Calu3 (cell line): ENCODE measurements at regions of chr17 and their contacts with region 1.

Region 1: DNA sequence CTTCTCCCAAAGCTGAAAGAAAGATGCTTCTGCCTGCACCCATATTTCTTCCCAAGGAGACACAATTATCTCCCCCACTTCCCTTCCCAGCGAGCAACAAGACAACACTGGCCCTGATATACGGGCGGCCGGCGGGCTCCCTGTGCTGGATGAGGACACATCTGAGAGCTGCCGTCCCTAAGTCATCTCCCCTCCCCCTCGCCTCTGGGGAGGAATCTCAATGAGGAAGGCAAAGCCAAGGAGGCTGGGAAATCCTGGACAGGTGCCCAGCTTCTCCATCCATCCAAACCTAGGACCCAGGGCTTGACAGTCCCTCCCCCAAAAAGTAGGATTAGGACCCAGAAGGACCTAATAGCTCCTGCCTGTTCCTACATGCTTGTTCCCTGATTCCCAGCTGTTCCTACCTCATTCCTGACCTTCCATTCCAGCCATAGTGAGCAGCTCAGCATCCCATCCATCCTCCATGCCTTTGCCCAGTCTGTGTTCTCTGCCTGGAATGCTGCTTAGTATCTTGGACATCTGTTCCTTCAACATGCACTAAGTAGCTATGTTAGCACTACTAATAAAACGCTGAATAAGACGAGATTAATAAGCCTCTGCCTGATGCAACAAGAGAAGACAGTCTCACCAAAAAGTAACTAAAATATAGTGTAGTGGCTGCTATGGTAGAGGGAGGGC is 167.9 kb downstream of the CCT6B start:
- DNase-seq: no peak
- H3K4me3 Mint-ChIP-seq: no peak overlapping the region
- H3K27ac Mint-ChIP-seq: no peak overlapping the region
- H3K4me1 Mint-ChIP-seq: no peaks in the 10 kb centered on the region
- H3K27me3 Mint-ChIP-seq: peaks cover 87% of the 10 kb centered on the region
- CTCF ChIP-seq: no peak

Region 2: DNA sequence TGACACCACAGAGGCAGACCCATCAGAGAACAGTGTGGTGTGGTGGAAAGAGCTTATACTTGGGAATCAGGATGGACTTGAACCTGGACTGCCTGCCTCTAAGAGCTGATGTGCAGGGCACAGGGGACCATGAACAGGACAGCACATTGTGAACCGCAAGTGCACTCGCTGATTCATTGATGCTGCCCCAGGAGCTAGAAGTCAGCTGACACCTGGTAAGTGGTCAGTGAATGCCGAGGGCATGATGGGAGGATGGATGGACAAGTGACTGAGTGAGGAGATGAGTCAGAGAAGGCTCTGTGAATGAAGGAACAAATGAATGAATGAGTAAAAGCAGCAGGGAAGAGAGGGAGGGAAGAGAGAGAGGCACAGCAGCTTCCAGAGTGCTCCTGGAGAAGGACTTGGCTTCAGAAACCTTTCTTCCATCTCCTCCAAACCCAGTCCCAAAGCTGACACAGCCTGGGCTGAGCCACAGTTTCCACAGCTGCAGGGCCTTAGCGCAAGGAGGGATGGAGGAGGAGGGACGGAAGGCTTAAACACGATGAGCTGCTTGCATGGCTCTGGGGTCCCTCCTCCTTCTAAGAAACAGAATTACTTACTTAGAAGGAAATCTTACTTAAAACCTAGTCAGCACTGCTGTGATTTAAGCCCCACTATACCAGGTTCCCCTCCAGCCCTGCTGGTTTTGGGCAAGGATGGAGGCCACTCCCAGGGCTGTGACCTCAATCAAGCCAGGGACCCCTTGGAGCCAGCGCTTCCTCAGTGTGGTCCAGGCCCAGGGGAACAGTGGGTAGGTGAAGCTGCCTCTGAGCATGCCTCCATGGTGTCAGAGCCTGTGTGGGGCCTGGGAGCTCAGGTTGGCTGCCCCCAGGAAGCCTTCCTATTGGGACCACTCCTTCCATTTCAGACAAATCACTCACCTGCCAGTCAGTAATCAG is 29.4 kb before region 1 on chr17:
- CTCF ChIA-PET with region 1: no interaction called
- intact Hi-C with region 1: no loop called
- DNase-seq: no peak
- H3K4me3 Mint-ChIP-seq: no peak overlapping the region
- H3K27ac Mint-ChIP-seq: no peak overlapping the region
- H3K4me1 Mint-ChIP-seq: peaks cover 7% of the 10 kb centered on the region
- H3K27me3 Mint-ChIP-seq: peaks cover 32% of the 10 kb centered on the region
- CTCF ChIP-seq: no peak

Region 3: DNA sequence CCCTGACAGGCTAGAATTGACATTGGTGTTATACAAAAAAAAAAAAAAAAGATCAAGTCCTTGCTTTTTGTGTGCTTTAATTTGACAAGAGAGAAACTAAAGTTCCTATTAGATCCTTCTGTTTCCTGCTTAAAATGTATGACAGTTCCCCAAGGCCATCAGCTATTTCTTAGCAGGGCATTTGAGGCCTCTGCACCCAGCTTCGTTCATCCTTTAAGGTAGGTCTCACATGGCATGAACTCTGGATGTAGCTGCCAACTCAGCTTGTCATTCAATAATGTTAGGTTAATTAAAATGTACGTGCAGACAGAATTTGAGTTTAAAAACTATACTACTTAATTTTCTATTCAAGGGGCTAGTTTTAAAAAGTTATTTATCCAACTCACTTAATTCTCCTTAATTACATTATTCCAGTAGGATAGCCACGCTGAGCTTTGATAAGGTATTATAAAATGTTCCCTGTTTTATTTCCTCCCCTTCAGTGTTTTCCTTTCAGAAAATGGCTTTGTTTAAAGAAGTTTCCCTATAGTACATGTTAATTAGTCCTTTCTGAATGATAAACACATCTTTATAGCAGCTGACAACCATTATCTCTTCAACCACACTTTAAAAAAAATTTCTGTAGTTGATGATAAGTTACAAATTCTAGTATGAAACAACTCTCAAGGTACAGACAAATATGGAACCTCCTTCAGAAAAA is 271.3 kb after region 1 on chr17:
- CTCF ChIA-PET with region 1: interaction called, 11 read pairs
- intact Hi-C with region 1: no loop called
- DNase-seq: no peak
- H3K4me3 Mint-ChIP-seq: no peak overlapping the region
- H3K27ac Mint-ChIP-seq: peak overlapping the region; percentile 50
- H3K4me1 Mint-ChIP-seq: peaks cover 51% of the 10 kb centered on the region
- H3K27me3 Mint-ChIP-seq: no peaks in the 10 kb centered on the region
- CTCF ChIP-seq: no peak